Cardiac septum (tissue), 1 donor: ENCODE measurements at regions of chr12 and their contacts with region 1.

Region 1: GRCh38 chr12:10140001-10140400 is 10.0 kb upstream of the CLEC7A start:
- DNase-seq: no peak

Region 2: GRCh38 chr12:10033783-10034545 is 106.0 kb before region 1 on chr12:
- intact Hi-C with region 1: loop called (anchors 5 kb)
- DNase-seq: no peak

Region 3: DNA sequence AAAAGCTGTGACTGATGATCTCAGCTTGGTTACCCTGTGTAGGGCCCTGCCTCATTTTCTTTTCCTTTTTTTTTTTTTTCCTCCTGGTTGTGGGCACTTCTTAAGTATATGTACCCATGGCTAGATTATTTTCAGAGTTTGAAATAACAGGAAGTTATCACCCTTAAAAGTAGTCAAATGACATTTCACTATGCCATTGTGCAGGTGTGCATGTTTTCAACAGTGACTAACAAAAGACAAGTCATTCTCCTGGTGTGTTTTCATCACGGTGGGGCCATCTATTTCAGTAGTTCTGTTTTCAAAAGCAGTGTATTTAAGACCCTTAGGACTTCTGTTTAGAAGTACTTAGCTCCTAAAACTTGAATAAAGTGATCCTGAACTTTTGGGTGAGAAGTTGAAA is 87.6 kb after region 1 on chr12:
- intact Hi-C with region 1: no loop called
- DNase-seq: no peak

Region 4: DNA sequence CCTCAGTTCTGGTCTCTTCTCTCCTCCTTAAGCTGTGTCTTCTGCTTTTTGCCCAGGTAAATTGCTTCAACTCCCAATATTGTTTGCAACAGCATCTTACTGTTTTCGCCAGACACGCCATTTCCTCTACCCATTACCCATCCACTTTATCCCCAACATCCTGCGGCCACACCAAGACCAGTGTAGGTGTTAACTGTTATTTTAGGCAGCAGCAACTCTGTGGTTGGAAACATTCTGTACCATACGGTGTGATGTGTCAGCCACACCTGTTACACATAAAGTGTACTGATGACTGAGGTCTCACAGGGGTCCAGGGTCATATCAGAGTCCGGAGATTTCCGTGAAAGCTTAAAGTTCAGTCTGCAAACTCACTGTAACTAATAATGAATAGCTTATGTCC is 145.9 kb after region 1 on chr12:
- intact Hi-C with region 1: no loop called
- DNase-seq: no peak